ENCODE measurements at regions of chr16 and their contacts with region 1.

Region 1: GRCh38 chr16:31458844-31459721 is at the start of gene ARMC5:
- DNase-seq: peak; percentile 90
- ATAC-seq: peak; percentile 84
- H3K4me3 ChIP-seq: peak within 1 kb of the TSS; percentile 77
- H3K27ac ChIP-seq: peak within 1 kb of the TSS; percentile 94
- H3K4me1 ChIP-seq: peaks cover 13% of the 10 kb centered on the region
- H3K27me3 ChIP-seq: no peaks in the 10 kb centered on the region
- CTCF ChIP-seq: no peak; the same call in 1 of the 2 replicates
- total RNA-seq, gene ARMC5: 5.4 and 5.8 TPM in 2 replicates

Region 2: DNA sequence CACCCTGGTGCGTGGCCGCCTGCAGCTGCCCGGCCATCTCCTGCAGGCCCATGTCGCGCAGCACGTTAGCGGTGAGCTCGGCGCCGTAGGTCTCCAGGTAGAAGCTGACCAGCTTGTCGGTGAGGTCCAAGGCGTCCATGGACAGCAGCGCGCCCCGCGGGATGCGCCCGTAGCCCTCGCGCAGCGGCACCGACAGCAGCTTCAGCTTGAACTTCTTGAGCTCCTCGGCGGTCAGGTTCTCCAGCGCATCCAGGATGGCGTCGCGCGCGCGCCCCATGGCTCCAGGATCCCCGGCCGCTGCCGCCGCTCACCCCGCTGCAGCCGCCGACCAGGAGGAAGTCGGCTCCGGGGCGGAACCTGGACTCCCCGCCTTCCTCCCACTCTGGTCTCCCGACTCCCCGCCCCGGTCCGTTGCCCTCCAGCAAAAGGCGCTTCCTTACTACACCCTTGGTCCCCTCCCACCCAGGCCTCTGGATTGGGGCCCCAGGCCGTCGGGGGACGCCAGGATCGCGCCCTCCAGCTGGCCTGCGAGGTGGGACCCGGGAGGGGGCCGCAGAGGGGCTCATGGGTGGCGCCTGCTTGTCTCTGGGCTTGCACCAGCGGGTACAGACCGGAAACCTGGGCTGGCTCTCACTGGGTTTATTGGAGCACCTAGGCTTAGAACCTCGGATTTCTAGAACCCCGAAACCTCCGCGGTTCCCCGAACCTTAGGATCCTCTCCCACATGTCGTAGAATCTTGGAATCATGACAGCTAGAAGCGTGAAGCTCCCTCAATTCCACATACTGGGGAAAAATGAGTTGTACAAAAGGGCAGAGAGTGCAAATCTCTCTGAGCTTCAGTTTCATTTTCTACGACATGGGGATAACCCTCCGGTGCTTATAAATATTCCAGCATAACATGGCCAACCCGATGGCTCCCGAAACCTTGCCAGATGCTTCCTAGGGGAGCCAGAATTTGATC is 256.4 kb before region 1 on chr16 and contains the start of gene PYCARD:
- CTCF ChIA-PET with region 1: no interaction called
- POLR2A ChIA-PET with region 1: no interaction called
- intact Hi-C with region 1: loop called (anchors 10 kb)
- DNase-seq: peak; percentile 17
- ATAC-seq: peak; percentile 32
- H3K4me3 ChIP-seq: peak within 1 kb of the TSS; percentile 68
- H3K27ac ChIP-seq: no peak within 1 kb of the TSS
- H3K4me1 ChIP-seq: peaks cover 22% of the 10 kb centered on the region; the same call in 1 of the 2 replicates
- H3K27me3 ChIP-seq: no peaks in the 10 kb centered on the region
- CTCF ChIP-seq: no peak
- total RNA-seq, gene PYCARD: 16.5 and 29.8 TPM in 2 replicates

Region 3: DNA sequence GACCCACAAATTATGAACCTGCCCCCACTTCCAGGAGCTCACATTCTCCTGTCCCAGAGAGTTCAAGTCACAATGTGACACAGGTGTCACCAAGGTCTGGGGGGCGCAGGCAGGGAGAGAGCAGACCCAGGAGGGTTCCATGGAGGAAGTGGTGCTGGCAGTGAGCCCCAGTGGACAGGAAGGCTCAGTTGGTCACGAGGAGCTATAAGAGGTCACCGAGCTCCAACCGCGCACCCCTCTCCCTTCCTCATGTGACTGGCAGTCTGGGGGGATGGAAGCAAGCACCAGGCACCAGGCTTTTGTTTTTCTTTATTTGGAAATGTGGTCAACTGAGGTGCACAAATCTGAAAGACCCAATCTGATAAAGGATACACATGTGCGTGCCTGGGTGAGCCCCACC is 63.4 kb before region 1 on chr16:
- CTCF ChIA-PET with region 1: no interaction called
- POLR2A ChIA-PET with region 1: no interaction called
- intact Hi-C with region 1: no loop called
- DNase-seq: no peak
- ATAC-seq: no peak
- H3K4me3 ChIP-seq: no peak overlapping the region
- H3K27ac ChIP-seq: no peak overlapping the region
- H3K4me1 ChIP-seq: no peaks in the 10 kb centered on the region
- H3K27me3 ChIP-seq: no peaks in the 10 kb centered on the region
- CTCF ChIP-seq: no peak

Region 4: DNA sequence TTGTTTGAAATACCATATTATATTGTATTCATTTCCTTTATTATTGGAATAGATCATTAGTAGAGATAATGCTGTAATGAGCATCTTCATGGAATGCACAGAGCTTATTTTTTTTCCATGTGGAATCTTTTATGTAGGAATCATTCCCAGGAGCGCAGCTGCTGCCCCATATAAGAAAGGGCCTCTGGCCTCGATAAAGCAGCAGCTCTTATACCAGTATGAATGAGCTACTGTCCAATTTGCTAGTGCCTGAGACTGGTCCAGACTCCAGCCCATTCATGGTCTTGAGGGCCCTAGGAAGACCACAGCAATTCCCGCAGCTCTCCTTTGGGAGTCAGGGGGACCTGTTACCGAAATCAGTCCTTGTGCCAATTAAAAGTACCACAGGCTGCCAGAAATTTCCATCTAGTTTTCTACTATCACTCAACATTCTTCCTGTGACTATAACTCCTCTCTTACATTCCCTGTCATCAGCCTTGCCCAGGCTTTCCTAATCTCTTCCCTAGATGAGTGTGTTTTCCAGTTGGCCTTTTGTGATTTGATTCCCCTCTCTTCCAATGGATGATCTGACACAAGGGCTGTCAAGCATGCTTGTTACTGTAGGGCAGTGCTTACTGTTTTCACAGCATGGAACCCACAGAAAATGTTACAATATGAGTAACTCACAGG is 18.4 kb before region 1 on chr16:
- CTCF ChIA-PET with region 1: interaction called, 12 read pairs
- POLR2A ChIA-PET with region 1: interaction called, 3 read pairs
- intact Hi-C with region 1: no loop called
- DNase-seq: no peak
- ATAC-seq: no peak
- H3K4me3 ChIP-seq: no peak overlapping the region
- H3K27ac ChIP-seq: no peak overlapping the region
- H3K4me1 ChIP-seq: no peaks in the 10 kb centered on the region
- H3K27me3 ChIP-seq: no peaks in the 10 kb centered on the region
- CTCF ChIP-seq: no peak

Region 5: DNA sequence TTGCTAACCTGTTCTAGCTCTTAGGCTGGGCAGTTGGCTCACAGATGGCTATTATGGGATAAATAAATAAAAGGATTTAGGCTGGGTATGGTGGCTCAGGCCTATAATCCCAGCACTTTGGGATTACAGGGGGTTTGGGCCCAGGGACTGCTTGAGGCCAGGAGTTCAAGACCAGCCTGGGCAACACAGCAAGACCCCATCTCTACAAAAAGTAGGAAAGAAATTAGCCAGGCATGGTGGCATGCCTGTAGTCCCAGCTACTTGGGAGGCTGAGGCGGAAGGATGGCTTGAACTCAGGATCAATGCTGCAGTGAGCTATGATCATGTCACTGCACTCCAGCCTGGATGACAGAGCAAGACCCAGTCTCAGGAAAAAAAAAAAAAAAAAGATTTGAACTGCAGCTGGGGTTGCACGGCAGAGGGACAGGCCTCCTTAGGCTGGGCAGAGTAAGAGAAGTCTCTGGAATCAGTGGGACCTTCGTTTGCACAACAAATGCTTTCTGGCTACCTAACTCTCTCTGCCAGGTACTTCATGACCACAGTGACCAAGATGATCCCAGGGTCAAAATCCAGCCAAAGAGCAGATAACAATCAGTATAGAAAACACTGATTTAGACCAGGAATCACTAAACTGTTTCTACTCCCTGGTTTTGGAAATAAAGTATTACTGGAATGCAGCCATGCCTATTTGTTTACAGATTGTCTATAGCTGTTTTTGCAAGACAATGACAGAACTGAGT is 42.3 kb after region 1 on chr16:
- CTCF ChIA-PET with region 1: no interaction called
- POLR2A ChIA-PET with region 1: no interaction called
- intact Hi-C with region 1: no loop called
- DNase-seq: no peak
- ATAC-seq: no peak
- H3K4me3 ChIP-seq: no peak overlapping the region
- H3K27ac ChIP-seq: no peak overlapping the region
- H3K4me1 ChIP-seq: no peaks in the 10 kb centered on the region
- H3K27me3 ChIP-seq: no peaks in the 10 kb centered on the region
- CTCF ChIP-seq: no peak

Region 6: DNA sequence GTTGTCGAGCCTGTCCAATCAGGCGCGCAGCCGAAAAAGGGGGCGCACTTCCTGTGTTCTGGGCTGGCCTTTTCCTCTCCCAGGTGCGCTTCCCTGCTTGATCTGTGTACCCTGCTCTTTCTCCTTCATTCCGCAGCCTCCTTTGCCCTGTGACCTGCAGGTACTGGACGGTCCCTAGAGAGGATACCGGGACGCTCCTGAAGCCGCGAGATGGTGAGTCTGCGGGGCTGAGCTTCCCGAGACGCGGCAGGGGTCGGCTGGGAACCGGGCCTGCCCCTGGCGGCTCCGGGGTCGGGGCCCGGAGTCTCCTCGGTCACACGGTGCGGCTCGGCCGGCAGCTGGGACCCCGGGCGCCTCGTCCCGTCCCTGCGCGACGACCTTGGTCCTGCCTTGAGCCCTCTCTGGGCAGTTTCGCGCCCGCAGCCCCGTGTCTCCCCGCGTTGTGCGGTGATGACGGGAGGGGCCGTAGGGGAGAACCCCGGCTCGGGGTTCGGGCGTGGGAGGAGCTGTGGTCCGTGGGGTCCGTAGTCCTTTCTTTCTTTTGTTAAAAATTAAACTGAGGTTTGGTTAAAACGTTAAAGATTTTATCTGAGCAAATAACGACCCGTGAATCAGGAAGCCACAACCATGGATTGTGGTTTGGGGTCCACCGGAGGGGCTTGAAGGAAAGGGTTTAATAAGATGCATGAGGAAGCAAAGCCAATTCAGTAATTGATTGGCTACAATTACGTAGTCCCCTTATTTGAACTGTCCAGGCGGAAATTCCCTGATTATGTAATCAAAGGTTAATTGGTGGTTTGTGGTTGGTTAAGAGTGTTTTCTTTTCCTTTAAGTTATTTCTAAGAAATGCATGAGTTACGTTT is 241.7 kb after region 1 on chr16:
- CTCF ChIA-PET with region 1: no interaction called
- POLR2A ChIA-PET with region 1: no interaction called
- intact Hi-C with region 1: loop called (anchors 2 kb)
- DNase-seq: no peak
- ATAC-seq: peak; percentile 99
- H3K4me3 ChIP-seq: peak overlapping the region; percentile 85
- H3K27ac ChIP-seq: no peak overlapping the region
- H3K4me1 ChIP-seq: peaks cover 5% of the 10 kb centered on the region; the same call in 1 of the 2 replicates
- H3K27me3 ChIP-seq: no peaks in the 10 kb centered on the region
- CTCF ChIP-seq: no peak